PC-3 (cell line): ENCODE measurements at regions of chr16 and their contacts with region 1.

Region 1: GRCh38 chr16:75555707-75556430 is at the start of gene TMEM231:
- DNase-seq: peak; percentile 83
- ATAC-seq: peak; percentile 88
- H3K4me3 ChIP-seq: peak within 1 kb of the TSS; percentile 96
- H3K27ac ChIP-seq: peak within 1 kb of the TSS; percentile 37
- H3K4me1 ChIP-seq: peaks cover 5% of the 10 kb centered on the region; the same call in 1 of the 2 replicates
- H3K27me3 ChIP-seq: no peaks in the 10 kb centered on the region
- CTCF ChIP-seq: no peak
- total RNA-seq, gene TMEM231: 9.6 and 20.2 TPM in 2 replicates

Region 2: GRCh38 chr16:75406945-75407344 is 148.9 kb before region 1 on chr16:
- CTCF ChIA-PET with region 1: no interaction called
- POLR2A ChIA-PET with region 1: no interaction called
- intact Hi-C with region 1: no loop called
- DNase-seq: no peak
- ATAC-seq: no peak
- H3K4me3 ChIP-seq: no peak overlapping the region
- H3K27ac ChIP-seq: no peak overlapping the region
- H3K4me1 ChIP-seq: peaks cover 8% of the 10 kb centered on the region; the same call in 1 of the 2 replicates
- H3K27me3 ChIP-seq: no peaks in the 10 kb centered on the region
- CTCF ChIP-seq: no peak

Region 3: DNA sequence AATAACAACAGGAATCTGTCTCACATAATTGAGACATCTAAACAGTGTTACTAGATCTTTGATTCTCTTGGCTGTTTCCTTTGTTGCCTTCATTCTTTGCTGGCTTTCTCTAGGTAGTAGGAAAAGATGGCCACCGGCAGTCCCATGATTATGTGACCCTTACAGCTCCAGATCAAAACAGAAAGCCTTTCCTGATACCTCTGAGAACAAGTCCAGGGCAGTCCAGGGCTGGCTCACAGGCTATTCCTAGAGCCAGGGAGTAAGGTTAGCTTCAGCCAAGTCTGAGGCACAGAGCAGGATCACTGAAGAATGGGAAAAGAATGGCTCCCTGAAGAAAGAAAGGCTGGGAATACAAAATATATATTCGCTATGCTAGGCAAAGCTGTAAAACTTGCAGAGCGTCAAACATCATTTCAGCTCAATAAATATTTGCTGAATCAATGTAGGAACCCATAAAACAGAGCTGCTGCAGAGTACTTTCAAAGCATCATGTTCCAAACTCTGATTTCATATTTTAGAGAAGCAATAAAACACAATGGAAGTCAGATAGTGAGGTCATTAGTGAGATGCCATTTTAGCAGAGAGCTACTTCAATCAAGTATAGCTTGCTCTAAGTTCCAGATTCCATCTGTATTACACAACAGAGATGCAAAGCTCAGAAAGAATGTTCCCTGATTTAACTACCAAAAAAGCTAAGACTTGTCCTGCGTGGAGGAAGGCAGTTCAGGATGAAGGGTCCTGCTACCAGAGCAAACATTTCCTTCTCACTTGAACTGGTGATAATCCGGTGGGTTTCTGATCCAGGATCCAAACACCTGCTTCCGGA is 43.8 kb after region 1 on chr16:
- CTCF ChIA-PET with region 1: no interaction called
- POLR2A ChIA-PET with region 1: no interaction called
- intact Hi-C with region 1: no loop called
- DNase-seq: no peak
- ATAC-seq: peak; percentile 37
- H3K4me3 ChIP-seq: no peak overlapping the region
- H3K27ac ChIP-seq: no peak overlapping the region
- H3K4me1 ChIP-seq: peaks cover 6% of the 10 kb centered on the region
- H3K27me3 ChIP-seq: no peaks in the 10 kb centered on the region
- CTCF ChIP-seq: no peak

Region 4: DNA sequence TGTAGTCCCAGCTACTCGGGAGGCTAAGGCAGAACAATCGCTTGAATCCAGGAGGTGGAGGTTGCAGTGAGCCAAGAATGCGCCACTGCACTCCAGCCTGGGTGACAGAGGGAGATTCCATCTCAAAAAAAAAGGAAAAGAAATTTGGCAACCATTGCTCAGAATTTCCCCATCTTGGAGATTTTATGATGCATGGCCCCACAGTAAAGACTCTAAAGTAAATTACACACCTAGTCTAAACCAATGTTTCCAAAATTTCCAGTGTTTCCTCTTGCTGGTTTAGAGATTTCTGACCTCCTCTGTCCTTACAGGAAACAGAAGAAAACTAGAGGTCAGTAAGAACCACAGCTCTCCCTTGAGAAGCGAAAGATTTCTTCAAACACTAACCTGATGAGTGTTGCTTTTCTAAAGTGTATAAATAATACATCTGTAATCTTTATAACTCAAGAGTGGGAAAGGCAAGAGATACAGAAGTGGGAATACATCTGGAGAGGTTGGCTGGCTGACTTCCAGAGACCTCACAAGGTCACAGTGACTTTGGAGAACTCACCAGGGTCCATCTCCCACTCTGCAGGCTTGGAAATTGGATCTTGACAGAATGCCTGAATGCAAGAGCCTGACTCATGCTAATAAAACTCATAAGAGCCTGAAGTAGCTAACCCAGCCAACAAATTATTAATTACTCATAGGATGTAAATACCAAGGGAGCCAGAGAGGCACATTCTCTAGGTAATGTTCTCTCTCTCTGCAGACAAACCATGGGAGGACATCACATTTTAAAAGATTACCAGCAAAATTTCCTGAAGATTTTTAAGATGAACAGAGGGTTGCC is 58.4 kb after region 1 on chr16:
- CTCF ChIA-PET with region 1: no interaction called
- POLR2A ChIA-PET with region 1: no interaction called
- intact Hi-C with region 1: no loop called
- DNase-seq: peak; percentile 84
- ATAC-seq: peak; percentile 89
- H3K4me3 ChIP-seq: no peak overlapping the region
- H3K27ac ChIP-seq: peak overlapping the region; percentile 72
- H3K4me1 ChIP-seq: peaks cover 31% of the 10 kb centered on the region
- H3K27me3 ChIP-seq: no peaks in the 10 kb centered on the region
- CTCF ChIP-seq: no peak

Region 5: DNA sequence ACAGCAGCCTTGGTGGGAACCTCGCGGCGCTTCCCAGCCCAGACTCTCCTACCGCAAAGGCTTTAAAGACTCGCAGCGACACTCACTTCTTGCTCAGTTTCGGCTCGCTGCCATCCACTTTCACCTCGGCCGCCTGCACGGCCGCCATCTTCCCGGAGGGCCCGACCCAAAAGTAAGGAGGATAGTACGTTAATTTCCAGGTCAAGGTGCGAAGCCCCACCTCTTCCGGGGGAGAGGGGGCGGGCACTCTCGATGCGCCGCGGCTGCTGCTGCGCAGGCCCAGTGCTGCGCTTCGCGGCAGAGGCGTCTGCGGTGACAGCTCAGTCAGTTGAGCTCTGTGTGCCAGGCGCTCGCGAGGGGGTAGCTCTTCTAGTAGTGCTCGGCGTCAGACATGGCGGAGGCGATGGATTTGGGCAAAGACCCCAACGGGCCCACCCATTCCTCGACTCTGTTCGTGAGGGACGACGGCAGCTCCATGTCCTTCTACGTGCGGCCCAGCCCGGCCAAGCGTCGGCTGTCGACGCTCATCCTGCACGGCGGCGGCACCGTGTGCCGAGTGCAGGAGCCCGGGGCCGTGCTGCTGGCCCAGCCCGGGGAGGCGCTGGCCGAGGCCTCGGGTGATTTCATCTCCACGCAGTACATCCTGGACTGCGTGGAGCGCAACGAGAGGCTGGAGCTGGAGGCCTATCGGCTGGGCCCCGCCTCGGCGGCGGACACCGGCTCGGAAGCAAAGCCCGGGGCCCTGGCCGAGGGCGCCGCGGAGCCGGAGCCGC is 91.8 kb after region 1 on chr16 and contains the starts of genes KARS1 and TERF2IP:
- CTCF ChIA-PET with region 1: no interaction called
- POLR2A ChIA-PET with region 1: no interaction called
- intact Hi-C with region 1: loop called (anchors 5 kb)
- DNase-seq: peak; percentile 90
- ATAC-seq: peak; percentile 91
- H3K4me3 ChIP-seq: peak within 1 kb of the TSS; percentile 100
- H3K27ac ChIP-seq: peak within 1 kb of the TSS; percentile 50
- H3K4me1 ChIP-seq: peaks cover 21% of the 10 kb centered on the region
- H3K27me3 ChIP-seq: no peaks in the 10 kb centered on the region
- CTCF ChIP-seq: no peak
- total RNA-seq, gene KARS1: 137 and 148 TPM in 2 replicates
- total RNA-seq, gene TERF2IP: 25.7 and 27.2 TPM in 2 replicates

Region 6: DNA sequence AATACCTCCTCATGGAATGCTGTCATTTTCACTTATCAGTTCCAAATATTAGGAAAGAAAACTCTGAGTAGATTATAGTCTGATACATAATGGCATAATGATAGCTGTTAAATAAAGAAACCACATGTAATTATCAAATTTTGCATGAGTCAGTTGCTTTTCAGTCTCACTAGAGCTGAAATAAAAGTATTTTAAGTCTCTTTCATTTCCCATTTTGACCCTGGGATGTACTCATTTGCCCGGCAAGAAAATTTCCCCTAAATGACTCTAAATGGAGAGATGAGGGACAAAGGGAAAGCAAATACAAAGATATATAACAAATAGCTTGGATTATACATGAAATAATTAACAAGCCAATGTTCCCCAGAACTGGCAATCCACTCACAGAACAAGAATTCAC is 218.3 kb after region 1 on chr16:
- CTCF ChIA-PET with region 1: no interaction called
- POLR2A ChIA-PET with region 1: no interaction called
- intact Hi-C with region 1: no loop called
- DNase-seq: no peak
- ATAC-seq: no peak
- H3K4me3 ChIP-seq: no peak overlapping the region
- H3K27ac ChIP-seq: no peak overlapping the region
- H3K4me1 ChIP-seq: no peaks in the 10 kb centered on the region
- H3K27me3 ChIP-seq: peaks cover 9% of the 10 kb centered on the region
- CTCF ChIP-seq: no peak